Activated CD4-positive, alpha-beta memory T cell treated with anti-CD3 and anti-CD28 coated beads, Interleukin-2, amount 10 ng/mL, durations not matched to agents 7 days and 5 days (primary cell): ENCODE measurements at regions of chr3 and their contacts with region 1.

Region 1: DNA sequence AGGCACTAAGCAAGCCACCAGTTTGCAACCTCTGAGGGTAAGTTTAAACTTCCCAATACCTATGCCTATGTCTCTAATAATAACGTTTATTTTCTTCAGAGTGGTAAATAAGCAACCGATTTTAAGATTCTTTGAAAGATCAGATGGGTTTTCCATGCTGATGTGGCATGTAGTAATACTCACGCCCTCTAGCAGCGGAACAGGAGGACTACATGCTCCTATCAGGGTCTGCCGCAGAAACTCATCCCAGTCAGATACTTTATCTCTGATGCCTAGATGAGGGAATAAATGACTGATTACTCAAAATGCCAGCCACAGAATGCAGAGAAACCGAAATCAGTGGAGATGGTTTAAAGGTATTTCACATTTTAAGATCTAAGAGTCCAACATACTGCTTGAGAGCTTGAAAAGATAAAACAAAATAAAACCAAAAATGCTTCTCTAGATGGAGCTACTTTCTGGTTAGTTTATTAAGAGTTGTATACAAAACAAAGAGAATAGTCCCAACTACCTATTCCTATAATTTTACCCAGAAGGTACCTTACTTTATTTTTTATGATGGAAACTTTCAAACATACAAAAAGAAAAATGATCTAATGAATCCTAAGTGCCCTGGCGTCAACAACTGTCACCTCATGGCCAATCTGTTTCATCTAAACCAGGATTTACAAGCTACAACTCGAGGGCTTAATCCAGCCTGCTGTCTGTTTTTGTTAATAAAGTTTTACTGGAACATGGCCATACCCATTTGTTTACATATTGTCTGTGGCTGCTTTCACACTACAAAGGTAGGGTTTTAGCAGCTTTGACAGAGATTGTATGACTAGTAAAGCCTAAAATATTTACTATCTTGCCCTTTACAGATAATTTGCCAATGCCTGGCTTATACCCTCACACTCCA is 37.5 kb upstream of the STIMATE start:
- DNase-seq: peak; percentile 52
- H3K4me3 Mint-ChIP-seq: no peak overlapping the region
- H3K27ac Mint-ChIP-seq: no peak overlapping the region
- H3K4me1 Mint-ChIP-seq: peaks cover 4% of the 10 kb centered on the region
- H3K27me3 Mint-ChIP-seq: no peaks in the 10 kb centered on the region

Region 2: DNA sequence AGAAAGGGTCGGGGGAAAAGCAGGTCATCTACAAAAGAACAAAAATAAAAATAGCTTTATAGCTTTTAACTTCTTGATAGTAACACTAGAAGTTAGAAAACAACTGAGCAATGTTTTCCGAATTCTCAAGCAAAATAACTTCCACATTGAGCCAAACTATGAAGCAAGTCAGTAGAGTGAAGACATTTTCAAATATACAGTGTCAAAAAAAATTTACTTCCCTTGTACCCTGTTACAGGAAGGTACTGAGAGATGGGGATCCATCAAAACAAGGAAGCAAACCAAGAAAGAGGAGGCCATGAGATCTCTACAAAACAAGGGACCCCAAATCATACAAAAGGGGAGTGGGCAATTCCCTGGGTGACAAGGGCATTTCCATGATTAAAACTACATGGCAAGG is 10.9 kb before region 1 on chr3:
- CTCF ChIA-PET with region 1: interaction called, 11 read pairs
- POLR2A ChIA-PET with region 1: no interaction called
- DNase-seq: no peak
- H3K4me3 Mint-ChIP-seq: no peak overlapping the region
- H3K27ac Mint-ChIP-seq: peak overlapping the region; percentile 5
- H3K4me1 Mint-ChIP-seq: peaks cover 44% of the 10 kb centered on the region
- H3K27me3 Mint-ChIP-seq: no peaks in the 10 kb centered on the region

Region 3: GRCh38 chr3:53150247-53151085 is 215.6 kb after region 1 on chr3:
- CTCF ChIA-PET with region 1: no interaction called
- POLR2A ChIA-PET with region 1: no interaction called
- DNase-seq: no peak
- H3K4me3 Mint-ChIP-seq: no peak overlapping the region
- H3K27ac Mint-ChIP-seq: no peak overlapping the region
- H3K4me1 Mint-ChIP-seq: no peaks in the 10 kb centered on the region
- H3K27me3 Mint-ChIP-seq: peaks cover 16% of the 10 kb centered on the region